Activated B cell treated with CpG ODN at 0.5 μM for 24 hours (primary cell): ENCODE measurements at regions of chr1 and their contacts with region 1.

Region 1: GRCh38 chr1:117605774-117606648 is at the start of gene TENT5C:
- DNase-seq: peak; percentile 99
- ATAC-seq: peak; percentile 88
- H3K4me3 Mint-ChIP-seq: peak within 1 kb of the TSS; percentile 99
- H3K27ac Mint-ChIP-seq: peak within 1 kb of the TSS; percentile 99
- H3K4me1 Mint-ChIP-seq: peaks cover 50% of the 10 kb centered on the region
- H3K27me3 Mint-ChIP-seq: no peaks in the 10 kb centered on the region
- CTCF ChIP-seq: no peak
- total RNA-seq, gene TENT5C: 56.2 and 59.3 TPM in 2 replicates

Region 2: DNA sequence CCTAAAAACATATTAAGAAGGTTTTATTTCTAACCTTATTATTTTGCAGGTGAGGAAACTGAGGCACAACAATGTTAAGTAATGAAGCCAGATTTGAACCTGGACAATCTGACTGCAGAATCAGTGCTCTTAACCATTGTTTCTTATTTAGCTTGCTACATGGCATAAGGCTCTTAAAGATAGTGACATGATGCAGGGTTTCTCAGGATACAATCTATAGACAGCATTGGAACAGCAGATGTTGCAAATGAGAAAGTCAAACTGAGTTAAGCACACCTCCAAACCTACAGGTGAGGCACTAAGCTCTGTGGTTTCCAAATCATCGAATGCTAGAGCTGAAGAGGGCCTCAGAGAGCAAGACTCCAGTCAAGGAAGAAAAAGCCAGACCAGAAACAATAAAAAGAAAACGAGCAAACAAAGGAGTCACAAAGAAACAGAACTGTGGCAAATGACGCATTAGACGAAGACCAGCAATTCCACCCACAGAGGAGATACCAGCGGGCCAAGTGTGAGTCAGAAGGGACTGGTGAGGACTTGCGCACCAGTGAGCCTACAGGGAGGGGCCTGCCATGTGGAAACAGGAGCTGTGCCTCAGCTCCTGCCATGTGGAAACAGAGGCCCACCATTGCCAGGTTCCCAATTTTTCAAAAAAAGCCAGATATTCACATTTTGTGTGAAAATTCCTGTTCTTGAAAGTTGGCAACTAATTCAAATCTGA is 1049.6 kb before region 1 on chr1:
- CTCF ChIA-PET with region 1: no interaction called
- POLR2A ChIA-PET with region 1: no interaction called
- intact Hi-C with region 1: loop called (anchors 10 kb)
- DNase-seq: no peak
- ATAC-seq: peak; percentile 76
- H3K4me3 Mint-ChIP-seq: peak overlapping the region; percentile 65
- H3K27ac Mint-ChIP-seq: peak overlapping the region; percentile 99
- H3K4me1 Mint-ChIP-seq: peaks cover 90% of the 10 kb centered on the region
- H3K27me3 Mint-ChIP-seq: no peaks in the 10 kb centered on the region
- CTCF ChIP-seq: no peak

Region 3: DNA sequence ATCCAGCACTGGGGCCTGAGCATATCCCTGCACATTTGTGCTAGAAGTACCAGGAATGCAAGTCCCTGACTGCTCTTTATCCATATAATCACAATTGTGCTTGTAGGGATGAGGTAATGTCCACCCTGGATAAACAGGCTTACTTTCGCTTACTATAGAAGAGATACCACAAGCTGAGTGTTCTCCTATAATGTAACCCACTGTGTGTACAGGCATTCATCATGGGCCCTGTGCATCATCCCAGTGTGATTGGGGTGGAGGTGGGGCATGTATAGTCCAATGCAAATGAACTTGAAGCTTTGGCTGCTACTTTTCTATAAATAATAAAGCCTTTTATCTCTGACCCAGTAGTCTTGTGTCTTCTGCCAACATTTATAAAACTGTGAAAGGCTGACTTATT is 169.5 kb before region 1 on chr1:
- CTCF ChIA-PET with region 1: no interaction called
- POLR2A ChIA-PET with region 1: no interaction called
- intact Hi-C with region 1: no loop called
- DNase-seq: no peak
- ATAC-seq: no peak
- H3K4me3 Mint-ChIP-seq: no peak overlapping the region
- H3K27ac Mint-ChIP-seq: no peak overlapping the region
- H3K4me1 Mint-ChIP-seq: peaks cover 5% of the 10 kb centered on the region
- H3K27me3 Mint-ChIP-seq: no peaks in the 10 kb centered on the region
- CTCF ChIP-seq: no peak

Region 4: DNA sequence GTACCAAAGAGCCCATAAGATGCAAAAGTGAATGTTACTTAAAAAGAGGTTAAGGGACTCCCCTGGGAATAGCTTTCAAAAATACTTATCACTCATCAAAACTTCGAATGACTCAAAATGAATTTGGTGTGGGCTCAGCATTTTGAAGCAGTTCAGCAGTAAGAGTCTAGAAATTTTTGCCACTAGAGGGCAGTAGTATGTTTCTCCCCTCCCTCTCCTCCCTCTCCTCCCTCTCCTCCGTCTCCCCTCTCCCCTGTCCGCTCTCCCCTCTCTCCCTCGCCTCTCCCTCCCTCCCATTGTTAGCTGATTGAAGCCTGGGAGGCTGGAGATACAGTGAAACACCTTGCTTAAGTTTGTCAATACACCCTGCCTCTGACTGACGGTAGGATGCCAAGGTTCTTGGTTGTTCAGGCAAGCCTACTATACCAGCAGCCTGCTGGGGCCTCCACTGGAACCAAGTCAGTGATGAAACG is 71.0 kb before region 1 on chr1:
- CTCF ChIA-PET with region 1: interaction called, 17 read pairs
- POLR2A ChIA-PET with region 1: interaction called, 24 read pairs
- intact Hi-C with region 1: loop called (anchors 1 kb)
- DNase-seq: peak; percentile 26
- ATAC-seq: peak; percentile 85
- H3K4me3 Mint-ChIP-seq: peak overlapping the region; percentile 16
- H3K27ac Mint-ChIP-seq: no peak overlapping the region
- H3K4me1 Mint-ChIP-seq: peaks cover 2% of the 10 kb centered on the region
- H3K27me3 Mint-ChIP-seq: no peaks in the 10 kb centered on the region
- CTCF ChIP-seq: no peak

Region 5: DNA sequence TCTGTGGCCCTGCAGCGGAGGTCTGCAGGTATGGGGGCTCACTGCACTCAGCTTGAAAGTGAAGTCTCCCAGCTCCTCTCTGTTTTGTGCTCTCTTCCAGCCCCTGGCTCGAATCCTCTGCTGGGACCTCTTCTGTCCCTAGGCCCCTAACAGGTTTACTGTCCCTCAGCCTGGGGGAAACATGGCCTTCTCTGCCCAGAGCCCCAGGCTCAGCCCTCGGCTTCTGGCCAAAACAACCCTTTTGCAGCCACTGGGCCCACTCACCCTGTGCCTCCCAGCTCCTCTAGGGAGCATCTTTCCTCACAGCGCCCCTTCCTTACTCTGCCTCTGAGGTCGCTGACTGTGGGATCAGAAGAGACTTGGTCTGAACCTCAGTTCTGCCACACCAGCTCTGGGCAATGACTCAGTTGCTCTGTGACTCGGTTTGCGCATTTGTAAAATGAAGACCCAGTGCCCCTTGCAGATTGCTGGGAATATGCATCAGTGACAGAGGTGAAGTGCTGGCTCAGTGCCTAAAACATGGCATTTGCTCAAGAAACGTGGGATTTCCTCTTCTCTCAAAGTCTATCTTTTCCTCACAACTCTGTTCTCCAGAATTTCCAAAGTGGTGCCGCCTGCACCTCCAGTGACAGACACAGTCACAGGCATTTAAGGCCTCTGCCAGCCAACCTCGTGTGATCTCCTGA is 26.6 kb before region 1 on chr1:
- CTCF ChIA-PET with region 1: no interaction called
- POLR2A ChIA-PET with region 1: no interaction called
- intact Hi-C with region 1: no loop called
- DNase-seq: no peak
- ATAC-seq: no peak
- H3K4me3 Mint-ChIP-seq: no peak overlapping the region
- H3K27ac Mint-ChIP-seq: no peak overlapping the region
- H3K4me1 Mint-ChIP-seq: no peaks in the 10 kb centered on the region
- H3K27me3 Mint-ChIP-seq: no peaks in the 10 kb centered on the region
- CTCF ChIP-seq: no peak

Region 6: GRCh38 chr1:117638759-117639158 is 32.7 kb after region 1 on chr1:
- CTCF ChIA-PET with region 1: interaction called, 3 read pairs
- POLR2A ChIA-PET with region 1: interaction called, 1,269 read pairs
- intact Hi-C with region 1: no loop called
- DNase-seq: no peak
- ATAC-seq: no peak
- H3K4me3 Mint-ChIP-seq: no peak overlapping the region
- H3K27ac Mint-ChIP-seq: no peak overlapping the region
- H3K4me1 Mint-ChIP-seq: peaks cover 56% of the 10 kb centered on the region
- H3K27me3 Mint-ChIP-seq: no peaks in the 10 kb centered on the region
- CTCF ChIP-seq: no peak

Region 7: GRCh38 chr1:117664314-117664713 is 58.3 kb after region 1 on chr1:
- CTCF ChIA-PET with region 1: interaction called, 6 read pairs
- POLR2A ChIA-PET with region 1: interaction called, 1,269 read pairs
- intact Hi-C with region 1: loop called (anchors 1 kb)
- DNase-seq: no peak
- ATAC-seq: peak; percentile 87
- H3K4me3 Mint-ChIP-seq: peak overlapping the region; percentile 44
- H3K27ac Mint-ChIP-seq: peak overlapping the region; percentile 93
- H3K4me1 Mint-ChIP-seq: peaks cover 83% of the 10 kb centered on the region
- H3K27me3 Mint-ChIP-seq: no peaks in the 10 kb centered on the region
- CTCF ChIP-seq: no peak

Region 8: DNA sequence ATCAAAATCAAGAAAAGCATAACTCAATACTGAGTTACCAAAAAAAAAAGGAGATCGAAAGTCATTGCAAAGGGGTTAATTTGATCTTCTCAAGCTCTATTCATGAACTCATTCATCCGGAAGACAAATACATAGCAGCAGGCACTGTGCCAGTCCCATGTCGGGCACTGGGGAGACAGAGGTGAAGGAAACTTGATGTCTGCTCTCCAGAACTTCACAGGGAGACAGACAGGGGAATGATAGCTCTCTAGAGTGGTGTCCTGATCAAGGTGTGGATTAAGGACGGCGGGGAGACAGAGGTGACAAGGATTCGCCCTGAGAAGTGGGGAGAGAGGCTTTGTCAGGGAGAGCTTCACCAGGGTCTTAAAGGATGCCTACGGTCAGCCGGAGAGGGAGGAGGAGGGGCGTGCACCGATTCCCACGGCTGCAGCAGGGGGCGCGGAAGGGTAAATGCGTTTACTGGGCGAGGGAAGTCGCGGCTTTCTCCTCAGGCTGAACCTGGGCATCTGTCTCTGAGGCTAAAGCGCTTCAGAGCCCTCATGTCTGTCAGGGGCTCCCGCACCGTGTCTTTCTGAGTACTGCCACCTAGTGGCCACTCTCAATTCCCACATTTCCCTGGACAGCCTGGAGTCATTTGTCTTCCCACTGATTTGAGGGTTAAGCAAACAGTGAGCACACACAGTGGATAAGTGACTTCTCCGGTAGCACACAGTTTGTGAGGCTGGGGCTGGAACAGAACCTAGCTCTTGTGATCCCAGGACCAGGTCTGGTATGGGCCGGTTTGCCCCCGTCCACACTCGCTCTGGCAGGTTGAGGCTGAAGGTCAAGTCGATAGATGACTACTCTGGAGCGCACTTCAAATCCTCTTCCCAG is 152.7 kb after region 1 on chr1:
- CTCF ChIA-PET with region 1: interaction called, 29 read pairs
- POLR2A ChIA-PET with region 1: interaction called, 5 read pairs
- intact Hi-C with region 1: loop called (anchors 2 kb)
- DNase-seq: peak; percentile 45
- ATAC-seq: peak; percentile 92
- H3K4me3 Mint-ChIP-seq: peak overlapping the region; percentile 73
- H3K27ac Mint-ChIP-seq: no peak overlapping the region
- H3K4me1 Mint-ChIP-seq: peaks cover 12% of the 10 kb centered on the region
- H3K27me3 Mint-ChIP-seq: peaks cover 15% of the 10 kb centered on the region
- CTCF ChIP-seq: peak; percentile 45